Activated naive CD8-positive, alpha-beta T cell treated with anti-CD3 and anti-CD28 coated beads, Interleukin-2, amount 10 ng/mL, durations not matched to agents 7 days and 5 days (primary cell): ENCODE measurements at regions of chr2 and their contacts with region 1.

Region 1: DNA sequence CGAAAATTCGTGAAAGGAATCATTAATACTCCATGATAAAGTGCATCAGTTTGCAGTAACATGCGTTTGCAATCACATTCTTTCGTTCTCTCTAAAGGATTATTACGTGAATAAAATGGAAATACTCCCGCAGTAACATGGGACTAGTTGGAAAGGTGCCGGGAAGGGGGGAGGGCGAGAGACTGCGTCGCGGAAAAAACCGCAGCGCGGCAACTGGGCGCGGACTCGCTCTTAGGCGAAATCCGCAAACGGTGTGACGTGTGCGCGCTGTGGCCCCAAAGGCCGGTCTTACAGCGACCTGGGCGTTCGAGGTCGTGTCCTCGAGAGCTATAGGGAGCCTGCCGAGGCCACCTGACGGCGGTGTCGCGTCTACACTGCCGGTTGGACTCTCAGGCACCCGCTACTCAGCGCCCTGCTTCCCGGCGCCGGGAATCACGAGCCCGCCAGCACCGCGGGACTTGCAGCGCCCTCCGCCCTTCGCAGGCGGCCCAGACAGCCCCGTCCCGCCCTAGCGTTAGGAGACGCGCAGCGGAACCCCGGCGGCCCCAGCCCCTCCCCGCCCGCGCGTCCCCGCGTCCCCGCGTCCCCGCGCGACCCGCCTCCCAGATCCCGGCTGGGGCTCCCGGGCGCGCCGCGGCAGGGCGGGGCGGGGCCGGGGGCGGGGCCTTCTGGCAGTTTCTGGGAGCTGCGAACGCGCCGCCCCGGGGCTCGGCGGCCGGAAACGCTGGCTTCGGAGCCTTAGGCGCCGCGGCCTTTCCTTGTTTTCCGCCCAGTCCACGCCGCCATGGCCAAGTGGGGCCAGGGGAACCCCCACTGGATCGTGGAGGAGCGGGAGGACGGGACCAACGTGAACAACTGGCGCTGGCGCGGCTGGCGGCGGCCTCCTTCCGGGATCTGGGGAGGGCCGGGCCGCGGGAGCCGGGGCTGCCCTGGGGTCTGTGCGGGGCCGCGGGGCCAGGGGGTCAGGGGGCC is 15.1 kb downstream of the C2orf74 start:
- DNase-seq: peak; percentile 99
- ATAC-seq: peak; percentile 89
- H3K4me3 Mint-ChIP-seq: peak overlapping the region; percentile 94
- H3K27ac Mint-ChIP-seq: peak overlapping the region; percentile 78
- H3K4me1 Mint-ChIP-seq: peaks cover 39% of the 10 kb centered on the region
- H3K27me3 Mint-ChIP-seq: peaks cover 8% of the 10 kb centered on the region

Region 2: DNA sequence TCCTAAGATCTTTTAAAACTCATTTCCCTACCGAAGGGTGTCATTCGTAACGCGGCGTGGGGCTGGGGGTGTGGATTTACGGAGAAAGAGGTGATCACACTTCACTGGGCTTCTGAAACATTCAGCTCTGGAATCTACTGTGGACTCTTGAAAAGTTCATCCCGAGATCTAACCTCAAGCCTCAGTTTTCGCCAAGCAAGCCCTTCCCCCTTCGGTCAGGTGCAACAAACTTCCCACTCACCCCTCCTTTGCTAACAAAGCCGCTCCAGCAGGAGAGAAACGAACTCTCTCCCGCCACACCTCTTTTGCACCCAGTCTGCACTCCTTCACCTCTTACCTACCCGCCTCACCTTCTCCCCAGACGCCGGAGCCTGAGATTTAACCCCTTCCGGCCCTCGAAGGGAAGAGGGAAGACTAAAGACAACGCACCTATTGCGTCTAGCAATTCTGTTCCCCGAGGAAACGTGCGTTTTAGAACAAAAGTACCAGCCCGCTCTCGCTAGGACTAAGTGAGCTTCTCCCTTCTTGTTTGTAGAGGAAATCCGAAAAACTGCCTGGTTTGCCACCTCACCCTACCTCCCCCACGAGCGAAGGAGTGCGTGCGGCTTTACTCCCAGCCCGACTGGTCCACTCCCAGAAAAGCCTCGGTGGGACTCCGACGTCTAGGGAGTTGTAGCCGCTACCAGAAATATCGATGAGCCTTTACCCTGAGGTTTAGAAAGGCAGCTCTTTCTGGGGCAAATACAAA is 160.1 kb before region 1 on chr2:
- POLR2A ChIA-PET with region 1: interaction called, 12 read pairs
- DNase-seq: peak; percentile 78
- ATAC-seq: peak; percentile 72
- H3K4me3 Mint-ChIP-seq: peak overlapping the region; percentile 93
- H3K27ac Mint-ChIP-seq: peak overlapping the region; percentile 92
- H3K4me1 Mint-ChIP-seq: peaks cover 27% of the 10 kb centered on the region
- H3K27me3 Mint-ChIP-seq: no peaks in the 10 kb centered on the region

Region 3: GRCh38 chr2:61117534-61117933 is 59.5 kb before region 1 on chr2:
- POLR2A ChIA-PET with region 1: no interaction called
- DNase-seq: no peak
- ATAC-seq: no peak
- H3K4me3 Mint-ChIP-seq: no peak overlapping the region
- H3K27ac Mint-ChIP-seq: no peak overlapping the region
- H3K4me1 Mint-ChIP-seq: no peaks in the 10 kb centered on the region
- H3K27me3 Mint-ChIP-seq: no peaks in the 10 kb centered on the region

Region 4: DNA sequence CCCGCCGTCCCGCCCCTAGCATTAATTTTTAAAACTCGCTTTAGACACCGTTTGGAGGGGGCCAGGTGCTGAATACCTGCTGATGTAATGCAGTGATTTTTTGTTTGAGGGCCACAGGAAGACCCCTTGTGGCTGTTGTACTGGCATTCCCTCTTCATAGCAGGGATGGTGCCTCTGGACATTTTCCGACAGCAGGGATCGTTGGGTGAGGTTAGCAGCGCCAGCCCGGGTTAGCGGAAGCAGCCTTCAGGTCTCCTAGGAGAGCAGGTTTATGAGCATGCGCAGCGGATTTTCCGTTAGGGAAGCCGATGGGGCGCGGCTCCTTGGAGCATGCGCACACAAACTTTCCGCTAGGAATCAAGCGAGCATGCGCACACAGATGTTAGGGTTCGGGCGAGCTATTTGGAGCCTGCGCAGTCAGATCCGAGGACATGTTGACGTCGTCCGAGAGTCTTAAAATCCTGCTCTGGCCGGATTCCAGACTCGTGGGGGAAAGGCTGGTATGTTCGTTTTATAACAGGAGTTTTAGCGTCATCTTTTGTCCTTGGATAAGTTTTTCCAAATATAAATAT is 32.3 kb before region 1 on chr2:
- POLR2A ChIA-PET with region 1: interaction called, 21 read pairs
- DNase-seq: peak; percentile 87
- ATAC-seq: peak; percentile 99
- H3K4me3 Mint-ChIP-seq: peak overlapping the region; percentile 92
- H3K27ac Mint-ChIP-seq: peak overlapping the region; percentile 86
- H3K4me1 Mint-ChIP-seq: peaks cover 4% of the 10 kb centered on the region
- H3K27me3 Mint-ChIP-seq: no peaks in the 10 kb centered on the region

Region 5: DNA sequence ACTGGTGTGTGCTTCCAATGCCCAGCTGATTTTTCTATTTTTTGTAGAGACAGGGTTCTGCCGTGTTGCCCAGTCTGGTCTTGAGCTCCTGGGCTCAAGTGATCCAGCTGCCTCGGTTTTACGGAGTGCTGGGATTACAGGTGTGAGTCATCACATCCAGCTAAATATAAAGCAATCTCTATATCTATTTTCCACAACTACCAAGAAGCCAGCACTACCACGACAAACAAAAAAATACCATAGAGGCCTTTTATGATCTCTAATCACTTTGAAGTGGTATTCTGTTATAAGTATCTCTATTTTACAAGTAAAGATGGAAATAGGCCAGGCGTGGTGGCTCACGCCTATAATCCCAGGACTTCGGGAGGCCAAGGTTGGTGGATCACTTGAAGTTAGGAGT is 19.6 kb after region 1 on chr2:
- POLR2A ChIA-PET with region 1: interaction called, 12 read pairs
- DNase-seq: no peak
- ATAC-seq: no peak
- H3K4me3 Mint-ChIP-seq: no peak overlapping the region
- H3K27ac Mint-ChIP-seq: no peak overlapping the region
- H3K4me1 Mint-ChIP-seq: peaks cover 9% of the 10 kb centered on the region
- H3K27me3 Mint-ChIP-seq: no peaks in the 10 kb centered on the region